ENCODE measurements at regions of chr17 and their contacts with region 1.

Region 1: DNA sequence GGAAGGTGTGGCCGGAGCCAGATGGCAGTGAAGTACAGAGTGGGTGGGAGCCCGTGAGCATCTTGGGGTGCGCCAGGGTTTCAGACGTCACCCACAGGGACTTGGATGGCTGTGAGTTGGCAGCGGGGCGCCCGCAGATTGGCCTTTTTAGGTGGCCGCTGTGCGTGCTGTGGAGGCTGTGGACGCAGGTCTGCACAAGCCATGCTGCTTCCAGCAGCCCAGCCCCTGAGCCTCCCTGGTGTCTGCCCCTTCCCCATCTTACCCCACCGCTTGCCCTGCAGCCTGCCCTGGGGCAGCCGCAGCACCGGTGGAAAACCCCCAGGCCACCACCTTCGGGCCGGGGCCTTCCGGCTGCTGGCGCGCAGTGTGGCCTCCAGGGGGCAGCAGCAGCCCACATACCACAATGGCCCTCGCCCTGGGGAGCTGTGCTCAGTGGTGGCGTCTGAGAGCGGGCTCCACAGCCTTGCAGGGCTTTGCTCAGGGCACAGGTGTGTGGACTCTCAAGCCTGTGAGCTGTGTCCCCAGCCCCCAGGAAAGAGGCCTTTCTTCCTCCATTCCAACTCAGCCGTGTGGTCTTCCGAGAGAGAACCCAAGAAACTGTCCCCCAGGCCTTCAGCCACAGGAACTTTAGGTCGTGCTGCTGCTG is 11.8 kb downstream of the ENDOV start:
- DNase-seq: peak; percentile 93
- ATAC-seq: peak; percentile 99
- H3K4me3 Mint-ChIP-seq: no peak overlapping the region
- H3K27ac Mint-ChIP-seq: no peak overlapping the region
- H3K4me1 Mint-ChIP-seq: peaks cover 9% of the 10 kb centered on the region
- H3K27me3 Mint-ChIP-seq: no peaks in the 10 kb centered on the region

Region 2: GRCh38 chr17:80101011-80101945 is 325.5 kb before region 1 on chr17 and contains the start of gene GAA:
- CTCF ChIA-PET with region 1: no interaction called
- POLR2A ChIA-PET with region 1: no interaction called
- intact Hi-C with region 1: no loop called
- DNase-seq: peak; percentile 93
- ATAC-seq: peak; percentile 89
- H3K4me3 Mint-ChIP-seq: peak within 1 kb of the TSS; percentile 84
- H3K27ac Mint-ChIP-seq: peak within 1 kb of the TSS; percentile 68
- H3K4me1 Mint-ChIP-seq: peaks cover 26% of the 10 kb centered on the region
- H3K27me3 Mint-ChIP-seq: no peaks in the 10 kb centered on the region
- total RNA-seq, gene GAA: 28.4 to 32.8 TPM

Region 3: GRCh38 chr17:80544655-80545498 is 118.1 kb after region 1 on chr17 and contains the start of gene RPTOR:
- CTCF ChIA-PET with region 1: interaction called, 5 read pairs
- POLR2A ChIA-PET with region 1: no interaction called
- intact Hi-C with region 1: loop called in 1 of 2 experiments (anchors 1 kb)
- DNase-seq: peak; percentile 95
- ATAC-seq: peak; percentile 98
- H3K4me3 Mint-ChIP-seq: peak within 1 kb of the TSS; percentile 89
- H3K27ac Mint-ChIP-seq: peak within 1 kb of the TSS; percentile 91
- H3K4me1 Mint-ChIP-seq: peaks cover 32% of the 10 kb centered on the region
- H3K27me3 Mint-ChIP-seq: peaks cover 9% of the 10 kb centered on the region
- total RNA-seq, gene RPTOR: 48.6 to 58.1 TPM

Region 4: DNA sequence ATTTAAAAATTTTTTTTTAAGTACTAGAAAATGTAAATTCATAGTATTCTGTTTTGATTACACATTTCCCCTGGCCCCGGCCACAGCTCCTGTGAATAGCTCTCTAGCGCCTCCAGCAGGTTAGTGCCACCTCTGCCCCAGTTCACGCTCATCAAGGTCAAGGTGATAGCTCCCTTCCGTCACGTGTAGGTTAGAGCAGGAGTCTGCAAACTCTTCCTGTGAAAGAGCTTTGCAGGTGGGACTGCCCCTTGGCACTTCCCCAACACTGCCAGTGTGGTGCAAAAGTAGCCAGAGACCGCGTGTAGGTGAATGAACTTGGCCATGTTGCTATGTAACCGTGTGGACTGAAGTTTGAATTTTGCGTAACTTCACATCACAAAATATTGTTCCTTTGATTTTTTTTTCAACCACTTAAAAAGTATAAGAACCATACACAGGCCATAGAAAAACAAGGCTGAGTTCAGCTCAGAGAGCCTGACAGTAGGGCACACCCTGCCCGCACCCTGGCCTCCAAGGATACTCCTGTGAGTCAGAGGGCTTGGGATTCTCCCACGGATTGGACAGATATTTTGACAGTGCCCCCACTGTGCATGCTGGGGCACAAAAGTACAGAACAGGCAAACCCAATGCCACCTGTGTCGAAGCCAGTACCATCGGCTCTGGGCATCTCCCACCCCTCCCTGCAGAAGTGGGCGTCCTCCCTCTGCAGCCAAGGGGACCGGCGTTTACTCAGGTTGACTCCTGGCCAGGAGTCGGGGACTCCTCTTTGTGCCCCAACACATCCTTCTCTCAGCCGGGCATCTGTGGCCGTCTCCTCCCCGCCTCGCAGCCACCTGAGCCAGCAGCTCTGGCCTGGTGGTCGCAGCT is 472.8 kb after region 1 on chr17:
- CTCF ChIA-PET with region 1: interaction called, 6 read pairs
- POLR2A ChIA-PET with region 1: no interaction called
- intact Hi-C with region 1: loop called (anchors 1 kb)
- DNase-seq: peak; percentile 92
- ATAC-seq: peak; percentile 82
- H3K4me3 Mint-ChIP-seq: no peak overlapping the region
- H3K27ac Mint-ChIP-seq: no peak overlapping the region
- H3K4me1 Mint-ChIP-seq: peaks cover 56% of the 10 kb centered on the region
- H3K27me3 Mint-ChIP-seq: no peaks in the 10 kb centered on the region

Region 5: DNA sequence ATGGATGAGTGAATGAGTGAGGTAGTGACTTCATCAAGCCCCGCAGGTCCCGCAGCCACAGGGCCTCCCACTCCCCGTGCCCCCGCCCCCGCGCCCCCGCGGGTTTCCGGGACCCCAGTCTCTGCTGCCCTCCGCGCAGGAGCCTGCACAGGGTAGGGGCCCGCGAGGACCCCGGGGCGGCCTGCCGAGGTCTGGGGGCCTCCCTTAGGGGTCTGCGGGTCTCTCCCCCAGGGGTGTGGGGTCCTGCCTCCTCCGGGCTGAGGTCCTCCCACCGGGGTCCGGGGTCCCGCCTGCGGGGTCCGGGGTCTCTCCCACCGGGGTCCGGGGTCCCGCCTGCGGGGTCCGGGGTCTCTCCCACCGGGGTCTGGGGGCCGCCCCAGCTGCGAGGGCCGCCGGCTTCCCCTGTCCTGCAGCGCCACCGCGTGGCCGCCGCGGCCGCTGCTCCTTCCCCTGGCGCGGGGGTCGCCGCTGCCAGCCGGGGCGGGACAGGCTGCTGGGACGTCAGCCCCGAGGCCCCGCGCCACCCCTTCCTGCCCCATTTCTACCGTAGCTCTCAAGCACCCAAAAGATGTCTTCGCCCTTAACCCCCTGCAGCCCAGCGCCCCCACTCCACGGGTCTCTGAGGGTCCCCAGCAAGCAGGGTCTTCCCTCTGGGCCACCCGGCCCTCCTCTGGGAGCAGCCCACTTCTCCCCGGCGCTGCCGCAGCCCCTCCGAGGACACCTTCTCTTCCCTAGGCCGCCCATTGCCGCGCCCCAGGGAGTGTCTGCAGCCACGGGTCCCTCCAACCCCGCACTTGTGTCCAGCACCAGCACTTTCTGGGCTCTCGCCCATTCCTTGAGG is 554.5 kb after region 1 on chr17:
- CTCF ChIA-PET with region 1: interaction called, 5 read pairs
- POLR2A ChIA-PET with region 1: no interaction called
- intact Hi-C with region 1: loop called (anchors 1 to 2 kb)
- DNase-seq: peak; percentile 66
- ATAC-seq: peak; percentile 43
- H3K4me3 Mint-ChIP-seq: no peak overlapping the region
- H3K27ac Mint-ChIP-seq: no peak overlapping the region
- H3K4me1 Mint-ChIP-seq: peaks cover 9% of the 10 kb centered on the region
- H3K27me3 Mint-ChIP-seq: peaks cover 5% of the 10 kb centered on the region